ENCODE measurements at regions of chr1 and their contacts with region 1.

Region 1: GRCh38 chr1:42035830-42036604 is 117.2 kb upstream of the GUCA2B start:
- DNase-seq: peak; percentile 96 to 98
- ATAC-seq: peak; percentile 97 to 99 (median 98)
- H3K4me3 ChIP-seq: peak overlapping the region in 9 of 10 donors; percentile 81 to 99 (median 95)
- H3K27ac ChIP-seq: peak overlapping the region; percentile 29 to 91 (median 81)
- H3K4me1 ChIP-seq: peaks cover 0 to 18% (median 12%) of the 10 kb centered on the region in 9 donors
- H3K27me3 ChIP-seq: no peaks in the 10 kb centered on the region
- CTCF ChIP-seq: no peak

Region 2: DNA sequence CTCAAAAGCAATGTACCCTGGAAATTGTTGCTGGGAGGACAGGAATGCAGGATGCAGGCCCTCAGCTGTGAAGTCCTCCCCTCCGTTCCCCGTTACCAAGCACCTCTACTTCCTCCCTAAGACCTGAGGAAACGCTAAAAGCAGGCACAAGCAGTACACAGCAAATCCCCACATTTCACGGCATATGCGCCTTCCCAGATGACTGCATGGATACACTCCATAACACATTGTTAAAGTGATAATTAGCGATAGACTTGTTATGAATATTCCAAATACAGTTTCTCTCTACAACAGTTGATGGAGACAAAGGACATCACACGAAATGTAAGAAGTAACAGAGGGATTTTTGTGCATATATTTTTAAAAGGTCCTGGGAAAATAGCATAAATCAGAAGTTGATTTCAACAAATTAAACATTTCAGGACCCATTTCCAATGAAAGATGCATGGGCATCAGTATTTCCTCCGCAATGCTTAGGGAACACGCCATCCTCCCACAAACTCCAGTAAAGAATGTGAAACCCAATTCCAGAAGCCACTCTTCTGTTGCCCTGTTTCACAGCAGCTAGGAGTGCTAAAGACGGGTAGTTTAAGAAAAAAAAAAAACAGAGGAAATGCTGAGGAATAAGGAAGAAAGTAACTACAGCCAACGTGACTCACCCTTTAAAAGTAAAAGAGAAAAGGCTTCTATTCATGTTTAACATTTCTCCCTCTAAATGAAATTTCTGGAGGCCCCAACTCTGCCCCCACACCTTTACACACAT is 192.8 kb before region 1 on chr1:
- intact Hi-C with region 1: loop called in 1 of 10 experiments (anchors 10 kb)
- DNase-seq: no peak
- ATAC-seq: peak in 1 of 8 donors; percentile 46
- H3K4me3 ChIP-seq: no peak overlapping the region
- H3K27ac ChIP-seq: peak overlapping the region in 1 of 10 donors; percentile 19
- H3K4me1 ChIP-seq: peaks cover 4 to 54% (median 27%) of the 10 kb centered on the region in 9 donors
- H3K27me3 ChIP-seq: no peaks in the 10 kb centered on the region
- CTCF ChIP-seq: no peak

Region 3: GRCh38 chr1:41902125-41902524 is 133.9 kb before region 1 on chr1:
- intact Hi-C with region 1: loop called in 1 of 10 experiments (anchors 10 kb)
- DNase-seq: no peak
- ATAC-seq: peak in 6 of 8 donors; percentile 12 to 85 (median 68)
- H3K4me3 ChIP-seq: no peak overlapping the region
- H3K27ac ChIP-seq: peak overlapping the region in 3 of 10 donors; percentile 13 to 66 (median 36)
- H3K4me1 ChIP-seq: peaks cover 7 to 54% (median 25%) of the 10 kb centered on the region in 9 donors
- H3K27me3 ChIP-seq: no peaks in the 10 kb centered on the region
- CTCF ChIP-seq: no peak

Region 4: DNA sequence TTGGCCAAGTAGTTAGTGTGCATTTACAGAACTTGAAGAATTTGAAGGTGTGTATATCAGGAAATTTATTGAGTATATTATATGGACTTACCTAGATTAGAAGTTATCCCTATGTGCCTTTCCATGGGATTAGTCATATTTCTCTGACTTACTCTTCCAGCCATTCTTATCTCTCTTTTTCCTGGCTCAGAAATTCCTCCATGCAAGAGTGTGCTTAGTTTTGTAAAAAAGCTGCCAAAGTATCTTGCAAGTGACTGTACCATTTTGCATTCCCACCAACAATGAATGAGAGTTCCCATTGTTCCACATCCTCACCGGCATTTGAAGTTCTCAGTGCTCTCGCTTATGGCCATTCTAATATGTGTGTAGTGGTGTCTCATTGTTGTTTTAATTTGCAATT is 35.0 kb after region 1 on chr1:
- intact Hi-C with region 1: no loop called
- DNase-seq: no peak
- ATAC-seq: no peak
- H3K4me3 ChIP-seq: no peak overlapping the region
- H3K27ac ChIP-seq: no peak overlapping the region
- H3K4me1 ChIP-seq: no peaks in the 10 kb centered on the region
- H3K27me3 ChIP-seq: peaks cover 0 to 39% (median 0%) of the 10 kb centered on the region in 7 donors
- CTCF ChIP-seq: no peak